MCF 10A (cell line): ENCODE measurements at regions of chr16 and their contacts with region 1.

Region 1: GRCh38 chr16:3841729-3842508 is 38.6 kb downstream of the CREBBP start:
- DNase-seq: no peak
- H3K4me3 Mint-ChIP-seq: no peak overlapping the region
- H3K27ac Mint-ChIP-seq: no peak overlapping the region
- H3K4me1 Mint-ChIP-seq: peaks cover 19% of the 10 kb centered on the region
- H3K27me3 Mint-ChIP-seq: no peaks in the 10 kb centered on the region
- CTCF ChIP-seq: no peak

Region 2: DNA sequence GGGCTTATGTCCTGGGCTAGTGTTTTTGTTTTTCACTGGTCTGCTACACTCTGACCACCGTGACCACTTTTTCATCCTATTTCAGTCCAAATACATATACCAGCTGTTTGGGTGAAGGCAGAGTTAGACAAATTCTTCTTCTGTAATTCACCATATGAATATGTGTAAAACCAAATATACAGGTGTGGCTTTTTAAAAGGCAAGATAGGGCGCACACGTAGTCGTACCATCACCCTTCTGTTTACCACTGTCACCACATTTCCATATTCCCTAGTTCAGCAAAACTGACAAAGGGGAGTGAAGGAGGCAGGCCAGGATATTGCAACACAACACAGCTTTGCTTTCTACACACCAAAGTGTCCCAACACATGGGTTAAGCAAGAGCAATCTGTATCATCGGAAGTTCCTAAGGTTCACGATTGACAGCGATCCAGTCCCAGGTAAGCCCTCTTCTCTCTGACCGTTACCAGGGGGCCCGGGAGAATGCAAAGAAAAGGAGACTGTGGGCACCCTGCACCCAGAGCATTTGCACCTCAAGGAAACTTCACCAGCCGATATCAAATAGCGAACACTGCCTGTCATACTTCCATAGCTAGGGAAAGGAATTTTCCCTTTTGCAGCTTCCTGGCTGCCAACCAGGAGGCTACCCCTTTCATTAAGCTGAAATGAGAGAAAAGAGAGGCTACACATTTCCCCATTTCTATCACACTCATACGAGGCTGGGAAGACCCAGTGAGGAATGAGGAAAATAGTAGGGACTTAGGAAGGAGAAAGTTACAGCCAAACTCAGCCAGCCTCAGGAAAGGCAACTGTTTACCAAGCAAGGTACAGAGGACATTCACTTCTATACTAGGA is 15.5 kb after region 1 on chr16:
- CTCF ChIA-PET with region 1: interaction called, 4 read pairs
- POLR2A ChIA-PET with region 1: interaction called, 13 read pairs
- intact Hi-C with region 1: no loop called
- DNase-seq: peak; percentile 93
- H3K4me3 Mint-ChIP-seq: peak overlapping the region; percentile 63
- H3K27ac Mint-ChIP-seq: peak overlapping the region; percentile 28
- H3K4me1 Mint-ChIP-seq: peaks cover 48% of the 10 kb centered on the region
- H3K27me3 Mint-ChIP-seq: no peaks in the 10 kb centered on the region
- CTCF ChIP-seq: no peak

Region 3: GRCh38 chr16:4713663-4714501 is 872.0 kb after region 1 on chr16:
- CTCF ChIA-PET with region 1: no interaction called
- POLR2A ChIA-PET with region 1: no interaction called
- intact Hi-C with region 1: no loop called
- DNase-seq: no peak
- H3K4me3 Mint-ChIP-seq: no peak overlapping the region
- H3K27ac Mint-ChIP-seq: no peak overlapping the region
- H3K4me1 Mint-ChIP-seq: no peaks in the 10 kb centered on the region
- H3K27me3 Mint-ChIP-seq: no peaks in the 10 kb centered on the region
- CTCF ChIP-seq: no peak